PC-3 (cell line): ENCODE measurements at regions of chr12 and their contacts with region 1.

Region 1: DNA sequence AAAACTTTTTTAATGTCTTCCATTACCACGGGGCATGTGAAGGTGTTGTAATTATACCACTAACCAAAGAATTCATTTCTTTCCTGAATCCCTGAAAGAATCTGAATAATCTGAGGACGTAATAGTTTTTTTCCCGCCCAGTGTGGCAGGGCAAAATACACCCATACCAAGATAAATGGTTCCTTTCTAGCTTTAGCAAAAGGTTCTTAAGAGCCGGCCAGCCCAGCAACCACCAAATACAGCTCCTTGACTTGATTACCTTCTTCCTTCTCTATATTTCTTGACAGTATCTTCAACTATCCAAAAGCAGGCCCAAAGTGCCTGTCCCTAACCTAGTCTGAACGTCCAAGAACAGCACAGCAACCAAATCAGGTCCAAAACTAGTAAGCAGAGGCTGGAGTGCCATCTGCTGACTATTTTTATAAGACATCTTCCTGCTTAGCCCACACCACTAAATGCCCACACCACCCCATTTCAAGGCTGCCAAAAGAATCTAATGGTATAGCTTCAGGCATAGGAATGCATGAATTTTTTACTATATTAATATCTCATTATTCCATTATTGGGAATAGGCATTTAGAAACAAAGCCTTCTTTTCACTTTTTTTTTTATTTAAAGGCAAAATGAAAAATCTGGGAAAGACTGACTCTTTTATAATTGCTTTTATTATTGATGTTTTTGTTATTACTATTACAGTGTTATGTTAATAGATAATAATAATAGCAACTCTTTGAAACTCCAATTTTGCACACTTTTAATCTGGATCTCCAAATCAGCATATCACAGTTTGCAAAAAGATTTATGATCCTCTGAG is 524.4 kb downstream of the MED13L start:
- DNase-seq: peak; percentile 89
- ATAC-seq: peak; percentile 83
- H3K4me3 ChIP-seq: no peak overlapping the region
- H3K27ac ChIP-seq: no peak overlapping the region
- H3K4me1 ChIP-seq: peaks cover 9% of the 10 kb centered on the region; the same call in 1 of the 2 replicates
- H3K27me3 ChIP-seq: peaks cover 58% of the 10 kb centered on the region
- CTCF ChIP-seq: peak; percentile 88

Region 2: GRCh38 chr12:114662512-114663177 is 1090.5 kb before region 1 on chr12:
- CTCF ChIA-PET with region 1: interaction called, 3 read pairs
- POLR2A ChIA-PET with region 1: no interaction called
- intact Hi-C with region 1: loop called (anchors 1 kb)
- DNase-seq: peak; percentile 98
- ATAC-seq: peak; percentile 44
- H3K4me3 ChIP-seq: no peak overlapping the region
- H3K27ac ChIP-seq: peak overlapping the region; percentile 75
- H3K4me1 ChIP-seq: peaks cover 47% of the 10 kb centered on the region
- H3K27me3 ChIP-seq: no peaks in the 10 kb centered on the region
- CTCF ChIP-seq: peak; percentile 96

Region 3: GRCh38 chr12:114999812-115000437 is 753.2 kb before region 1 on chr12:
- CTCF ChIA-PET with region 1: no interaction called
- POLR2A ChIA-PET with region 1: no interaction called
- intact Hi-C with region 1: loop called (anchors 5 kb)
- DNase-seq: peak; percentile 100
- ATAC-seq: peak; percentile 74
- H3K4me3 ChIP-seq: no peak overlapping the region
- H3K27ac ChIP-seq: peak overlapping the region; percentile 92
- H3K4me1 ChIP-seq: peaks cover 39% of the 10 kb centered on the region
- H3K27me3 ChIP-seq: no peaks in the 10 kb centered on the region
- CTCF ChIP-seq: no peak

Region 4: DNA sequence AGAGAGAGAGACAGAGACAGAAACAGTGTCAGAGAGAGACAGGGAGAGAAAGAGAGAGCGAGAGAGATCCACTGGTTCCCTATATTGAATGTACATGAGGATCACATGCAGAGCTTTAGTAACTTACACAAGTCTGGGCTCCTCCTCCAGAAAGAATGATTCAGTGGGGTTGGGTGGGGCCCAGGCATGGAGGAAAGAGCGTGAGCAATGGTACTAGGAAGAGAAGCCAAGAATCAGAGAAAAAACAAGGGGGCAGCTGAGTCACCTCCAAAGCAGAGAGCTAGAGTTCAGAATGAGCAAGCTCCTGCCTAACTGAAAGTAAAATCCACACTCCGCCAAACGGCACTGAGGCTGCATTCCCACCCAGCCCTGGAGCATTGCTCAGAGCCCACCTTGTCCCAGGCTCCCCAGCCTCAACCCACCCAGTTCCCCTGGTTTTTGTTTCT is 399.1 kb before region 1 on chr12:
- CTCF ChIA-PET with region 1: no interaction called
- POLR2A ChIA-PET with region 1: no interaction called
- intact Hi-C with region 1: loop called (anchors 10 kb)
- DNase-seq: peak; percentile 98
- ATAC-seq: peak; percentile 94
- H3K4me3 ChIP-seq: peak overlapping the region; percentile 68
- H3K27ac ChIP-seq: peak overlapping the region; percentile 94
- H3K4me1 ChIP-seq: peaks cover 23% of the 10 kb centered on the region
- H3K27me3 ChIP-seq: no peaks in the 10 kb centered on the region
- CTCF ChIP-seq: no peak

Region 5: DNA sequence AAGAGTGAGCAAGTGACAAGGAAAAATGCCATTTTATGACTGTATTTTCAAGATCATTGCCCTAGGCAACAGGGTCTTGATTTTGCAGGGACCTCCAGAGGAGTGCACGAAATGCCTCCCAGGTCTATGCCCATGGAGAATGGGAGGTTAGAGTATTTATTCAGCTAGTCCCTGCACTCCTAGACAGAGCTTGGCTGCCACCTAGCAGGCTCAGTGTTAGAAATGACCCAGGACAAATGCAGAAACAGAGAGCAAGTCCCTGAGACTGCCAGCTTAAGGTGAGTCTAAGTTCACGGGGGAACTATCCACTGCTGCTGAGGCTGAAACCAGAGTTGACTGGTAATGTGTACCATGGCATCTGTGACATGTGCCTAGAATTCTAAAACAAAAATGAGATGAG is 17.9 kb after region 1 on chr12:
- CTCF ChIA-PET with region 1: no interaction called
- POLR2A ChIA-PET with region 1: interaction called, 22 read pairs
- intact Hi-C with region 1: no loop called
- DNase-seq: peak; percentile 47
- ATAC-seq: peak; percentile 87
- H3K4me3 ChIP-seq: no peak overlapping the region
- H3K27ac ChIP-seq: no peak overlapping the region
- H3K4me1 ChIP-seq: peaks cover 8% of the 10 kb centered on the region; the same call in 1 of the 2 replicates
- H3K27me3 ChIP-seq: no peaks in the 10 kb centered on the region
- CTCF ChIP-seq: peak; percentile 50

Region 6: GRCh38 chr12:115801871-115802270 is 48.8 kb after region 1 on chr12:
- CTCF ChIA-PET with region 1: no interaction called
- POLR2A ChIA-PET with region 1: no interaction called
- intact Hi-C with region 1: no loop called
- DNase-seq: no peak
- ATAC-seq: no peak
- H3K4me3 ChIP-seq: no peak overlapping the region
- H3K27ac ChIP-seq: no peak overlapping the region
- H3K4me1 ChIP-seq: no peaks in the 10 kb centered on the region
- H3K27me3 ChIP-seq: 0 out of 2 replicates have a peak, but pooled peaks cover 6% of the 10 kb centered on the region
- CTCF ChIP-seq: no peak